B cell (primary cell): ENCODE measurements at regions of chr17 and their contacts with region 1.

Region 1: GRCh38 chr17:39754161-39754951 is 16.6 kb downstream of the GRB7 start:
- DNase-seq: peak; percentile 99
- ATAC-seq: peak; percentile 67
- H3K4me3 ChIP-seq: peak overlapping the region in 4 of 5 experiments; percentile 46 to 63 (median 56)
- H3K4me3 Mint-ChIP-seq: peak overlapping the region; percentile 86
- H3K27ac ChIP-seq: peak overlapping the region; percentile 100
- H3K27ac Mint-ChIP-seq: peak overlapping the region; percentile 97
- H3K4me1 ChIP-seq: peaks cover 57 to 60% of the 10 kb centered on the region in 2 donors
- H3K4me1 Mint-ChIP-seq: peaks cover 63% of the 10 kb centered on the region
- H3K27me3 ChIP-seq: no peaks in the 10 kb centered on the region
- H3K27me3 Mint-ChIP-seq: no peaks in the 10 kb centered on the region
- CTCF ChIP-seq: peak; percentile 93

Region 2: GRCh38 chr17:39636927-39637736 is 117.2 kb before region 1 on chr17 and contains the start of gene STARD3:
- CTCF ChIA-PET with region 1: interaction called, 6 read pairs
- POLR2A ChIA-PET with region 1: no interaction called
- intact Hi-C with region 1: loop called (anchors 5 kb)
- DNase-seq: peak; percentile 93
- ATAC-seq: peak; percentile 92
- H3K4me3 ChIP-seq: peak within 1 kb of the TSS; percentile 76 to 94 (median 82)
- H3K4me3 Mint-ChIP-seq: peak within 1 kb of the TSS; percentile 95
- H3K27ac ChIP-seq: peak within 1 kb of the TSS; percentile 89 to 90
- H3K27ac Mint-ChIP-seq: peak within 1 kb of the TSS; percentile 91
- H3K4me1 ChIP-seq: peaks cover 49 to 63% of the 10 kb centered on the region in 2 donors
- H3K4me1 Mint-ChIP-seq: peaks cover 60% of the 10 kb centered on the region
- H3K27me3 ChIP-seq: peaks cover 0 to 3% (median 0%) of the 10 kb centered on the region in 4 experiments
- H3K27me3 Mint-ChIP-seq: no peaks in the 10 kb centered on the region
- CTCF ChIP-seq: no peak
- total RNA-seq, gene STARD3: 93.1 and 101 TPM in 2 replicates

Region 3: GRCh38 chr17:39687811-39688518 is 66.4 kb before region 1 on chr17 and contains the start of gene PGAP3:
- CTCF ChIA-PET with region 1: interaction called, 4 read pairs
- POLR2A ChIA-PET with region 1: interaction called, 10 read pairs
- intact Hi-C with region 1: no loop called
- DNase-seq: peak; percentile 94
- ATAC-seq: peak; percentile 94
- H3K4me3 ChIP-seq: peak within 1 kb of the TSS; percentile 65 to 92 (median 75)
- H3K4me3 Mint-ChIP-seq: peak within 1 kb of the TSS; percentile 99
- H3K27ac ChIP-seq: peak within 1 kb of the TSS; percentile 70 to 87
- H3K27ac Mint-ChIP-seq: peak within 1 kb of the TSS; percentile 98
- H3K4me1 ChIP-seq: peaks cover 15 to 18% of the 10 kb centered on the region in 2 donors
- H3K4me1 Mint-ChIP-seq: peaks cover 21% of the 10 kb centered on the region
- H3K27me3 ChIP-seq: no peaks in the 10 kb centered on the region
- H3K27me3 Mint-ChIP-seq: no peaks in the 10 kb centered on the region
- CTCF ChIP-seq: no peak
- total RNA-seq, gene PGAP3: 34.3 and 36.9 TPM in 2 replicates

Region 4: DNA sequence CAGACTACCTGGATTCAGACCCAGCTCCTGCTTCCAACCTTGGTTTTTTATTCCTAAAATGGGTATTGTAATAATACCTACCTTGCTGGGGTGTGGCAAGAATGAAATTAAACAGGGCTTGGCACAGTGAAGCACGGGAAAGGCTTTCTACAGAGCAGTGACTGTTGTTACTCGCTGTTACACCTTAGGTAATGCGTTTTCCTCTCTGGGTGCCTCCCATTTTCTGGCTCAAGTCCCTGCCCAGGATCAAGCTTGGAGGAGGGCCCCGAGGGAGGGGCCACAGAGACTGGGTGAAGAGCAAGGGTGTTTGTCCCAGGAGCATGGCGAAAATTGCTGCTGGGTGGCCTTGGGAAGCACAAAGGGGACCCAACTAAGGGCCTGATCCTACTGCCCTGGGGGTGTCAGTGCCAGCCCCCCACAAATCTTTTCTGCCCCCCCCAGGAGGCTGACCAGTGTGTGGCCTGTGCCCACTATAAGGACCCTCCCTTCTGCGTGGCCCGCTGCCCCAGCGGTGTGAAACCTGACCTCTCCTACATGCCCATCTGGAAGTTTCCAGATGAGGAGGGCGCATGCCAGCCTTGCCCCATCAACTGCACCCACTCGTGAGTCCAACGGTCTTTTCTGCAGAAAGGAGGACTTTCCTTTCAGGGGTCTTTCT is 37.3 kb before region 1 on chr17:
- CTCF ChIA-PET with region 1: no interaction called
- POLR2A ChIA-PET with region 1: no interaction called
- intact Hi-C with region 1: no loop called
- DNase-seq: no peak
- ATAC-seq: no peak
- H3K4me3 ChIP-seq: no peak overlapping the region
- H3K4me3 Mint-ChIP-seq: no peak overlapping the region
- H3K27ac ChIP-seq: no peak overlapping the region
- H3K27ac Mint-ChIP-seq: no peak overlapping the region
- H3K4me1 ChIP-seq: no peaks in the 10 kb centered on the region
- H3K4me1 Mint-ChIP-seq: no peaks in the 10 kb centered on the region
- H3K27me3 ChIP-seq: no peaks in the 10 kb centered on the region
- H3K27me3 Mint-ChIP-seq: no peaks in the 10 kb centered on the region
- CTCF ChIP-seq: no peak

Region 5: GRCh38 chr17:39777534-39778365 is 23.4 kb after region 1 on chr17:
- CTCF ChIA-PET with region 1: interaction called, 32 read pairs
- POLR2A ChIA-PET with region 1: interaction called, 46 read pairs
- intact Hi-C with region 1: loop called (anchors 1 kb)
- DNase-seq: peak; percentile 59
- ATAC-seq: peak; percentile 36
- H3K4me3 ChIP-seq: peak overlapping the region; percentile 17 to 86 (median 51)
- H3K4me3 Mint-ChIP-seq: peak overlapping the region; percentile 89
- H3K27ac ChIP-seq: peak overlapping the region; percentile 33 to 86
- H3K27ac Mint-ChIP-seq: peak overlapping the region; percentile 93
- H3K4me1 ChIP-seq: peaks cover 80 to 90% of the 10 kb centered on the region in 2 donors
- H3K4me1 Mint-ChIP-seq: peaks cover 81% of the 10 kb centered on the region
- H3K27me3 ChIP-seq: no peaks in the 10 kb centered on the region
- H3K27me3 Mint-ChIP-seq: no peaks in the 10 kb centered on the region
- CTCF ChIP-seq: no peak

Region 6: GRCh38 chr17:39822051-39822451 is 67.7 kb after region 1 on chr17:
- CTCF ChIA-PET with region 1: interaction called, 7 read pairs
- POLR2A ChIA-PET with region 1: interaction called, 10 read pairs
- intact Hi-C with region 1: loop called (anchors 2 kb)
- DNase-seq: peak; percentile 81
- ATAC-seq: peak; percentile 70
- H3K4me3 ChIP-seq: no peak overlapping the region
- H3K4me3 Mint-ChIP-seq: peak overlapping the region; percentile 70
- H3K27ac ChIP-seq: peak overlapping the region; percentile 58 to 85
- H3K27ac Mint-ChIP-seq: peak overlapping the region; percentile 86
- H3K4me1 ChIP-seq: peaks cover 53 to 54% of the 10 kb centered on the region in 2 donors
- H3K4me1 Mint-ChIP-seq: peaks cover 53% of the 10 kb centered on the region
- H3K27me3 ChIP-seq: no peaks in the 10 kb centered on the region
- H3K27me3 Mint-ChIP-seq: no peaks in the 10 kb centered on the region
- CTCF ChIP-seq: no peak

Region 7: DNA sequence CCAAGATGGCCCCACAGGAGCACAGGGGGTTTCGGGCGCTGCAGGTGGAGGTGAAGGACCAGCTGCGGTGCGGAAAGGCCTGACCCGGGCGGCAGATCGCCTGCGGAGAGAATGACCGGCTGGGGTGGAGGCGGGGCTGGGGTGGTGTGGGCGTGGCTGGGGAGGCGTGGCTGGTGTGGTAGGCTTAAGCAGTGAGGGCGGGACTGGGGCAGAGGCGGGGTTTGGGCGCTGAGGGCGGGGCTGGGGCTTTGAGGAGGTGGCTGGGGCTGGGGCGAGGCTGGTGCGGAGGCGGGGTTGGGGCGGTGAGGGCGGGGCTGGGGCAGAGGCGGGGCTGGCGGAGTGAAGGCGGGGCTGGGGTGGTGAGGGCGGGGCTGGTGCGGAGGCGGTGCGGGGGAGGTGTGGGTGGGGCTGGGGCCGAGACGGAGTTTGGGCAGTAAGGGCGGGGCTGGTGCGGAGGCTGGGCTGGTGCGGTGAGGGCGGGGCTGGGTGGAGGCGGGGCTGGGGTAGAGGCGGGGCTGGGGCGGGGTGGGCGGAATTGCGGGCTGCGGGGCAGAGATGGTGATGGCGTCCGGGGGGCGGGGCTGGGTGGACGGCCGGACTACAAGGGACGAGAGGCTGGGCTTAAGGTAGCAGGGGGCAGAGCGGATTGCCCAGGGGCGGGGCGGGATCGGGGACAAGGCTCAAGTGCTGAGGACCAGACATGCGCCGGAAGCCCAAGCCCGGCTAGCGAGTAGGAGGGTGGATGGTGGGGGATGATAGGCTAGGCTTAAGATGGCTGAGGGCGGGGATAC is 198.5 kb after region 1 on chr17:
- CTCF ChIA-PET with region 1: interaction called, 3 read pairs
- POLR2A ChIA-PET with region 1: interaction called, 3 read pairs
- intact Hi-C with region 1: loop called (anchors 1 kb)
- DNase-seq: peak; percentile 96
- ATAC-seq: peak; percentile 84
- H3K4me3 ChIP-seq: peak overlapping the region in 4 of 5 experiments; percentile 50 to 66 (median 61)
- H3K4me3 Mint-ChIP-seq: peak overlapping the region; percentile 87
- H3K27ac ChIP-seq: peak overlapping the region; percentile 62
- H3K27ac Mint-ChIP-seq: peak overlapping the region; percentile 81
- H3K4me1 ChIP-seq: peaks cover 24 to 38% of the 10 kb centered on the region in 2 donors
- H3K4me1 Mint-ChIP-seq: peaks cover 31% of the 10 kb centered on the region
- H3K27me3 ChIP-seq: no peaks in the 10 kb centered on the region
- H3K27me3 Mint-ChIP-seq: no peaks in the 10 kb centered on the region
- CTCF ChIP-seq: no peak